Left lung (tissue), 14 donors: ENCODE measurements at regions of chr1 and their contacts with region 1.

Region 1: DNA sequence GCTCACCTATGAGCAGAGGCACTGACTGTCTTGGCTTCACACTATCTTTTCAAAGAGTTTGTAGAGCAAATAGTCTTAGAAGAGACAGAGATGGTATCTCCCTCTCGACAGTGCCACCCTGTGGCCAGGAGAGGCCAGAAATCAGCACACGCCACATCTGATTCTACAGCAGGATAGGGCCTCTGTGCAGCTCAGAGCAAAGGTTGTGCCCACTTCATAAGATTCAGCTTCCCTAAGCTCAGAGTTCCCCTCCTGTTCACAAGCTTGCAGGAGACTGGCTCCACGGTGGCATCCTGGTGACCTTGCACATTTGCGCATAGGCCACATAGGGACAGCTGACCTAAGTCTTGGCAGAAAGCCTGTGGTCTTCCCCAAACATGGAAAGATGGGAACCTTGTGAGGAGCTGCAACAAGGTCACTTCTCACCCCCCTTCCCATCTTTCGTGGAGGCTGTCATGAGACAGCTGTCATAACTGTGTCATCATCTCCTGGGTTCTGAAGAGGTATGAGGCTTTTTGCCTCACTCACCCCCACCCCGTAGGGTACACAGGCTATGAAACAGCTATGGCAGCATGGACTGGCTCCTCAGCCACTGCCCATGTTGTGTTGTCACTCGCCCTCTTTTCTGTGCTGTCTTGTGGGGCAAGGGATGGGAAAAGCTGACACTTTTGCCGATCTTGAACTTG is 3.0 kb downstream of the ITLN2 start:
- DNase-seq: peak; percentile 25 to 83 (median 60)
- ATAC-seq: peak; percentile 96
- H3K4me3 ChIP-seq: no peak overlapping the region
- H3K27ac ChIP-seq: no peak overlapping the region
- H3K4me1 ChIP-seq: no peaks in the 10 kb centered on the region
- H3K27me3 ChIP-seq: peaks cover 0 to under 1% of the 10 kb centered on the region in 2 donors
- CTCF ChIP-seq: peak; percentile 64 to 71

Region 2: DNA sequence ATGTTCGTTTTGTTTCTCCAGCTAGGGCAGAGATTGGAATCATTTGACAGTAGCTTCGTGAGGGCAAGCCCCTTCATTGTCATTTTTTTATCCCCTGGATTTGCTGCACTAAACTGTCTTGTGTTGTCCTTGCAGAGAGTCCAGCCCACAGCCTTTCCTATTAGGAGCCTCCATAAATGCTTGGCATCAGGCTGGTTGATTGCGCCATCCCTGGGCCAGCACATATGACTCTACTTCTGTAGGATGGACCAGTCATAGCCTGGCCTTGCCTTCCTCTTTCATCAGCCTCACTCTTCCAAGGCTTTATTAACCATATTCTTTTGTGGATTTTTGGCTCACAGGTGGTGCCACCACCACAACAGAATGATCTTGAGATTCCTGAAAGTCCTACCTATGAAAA is 124.2 kb before region 1 on chr1:
- intact Hi-C with region 1: no loop called
- DNase-seq: peak in 1 of 4 donors; percentile 65
- ATAC-seq: peak; percentile 55
- H3K4me3 ChIP-seq: no peak overlapping the region
- H3K27ac ChIP-seq: no peak overlapping the region
- H3K4me1 ChIP-seq: no peaks in the 10 kb centered on the region
- H3K27me3 ChIP-seq: no peaks in the 10 kb centered on the region
- CTCF ChIP-seq: no peak

Region 3: GRCh38 chr1:160837558-160838205 is 113.9 kb before region 1 on chr1:
- intact Hi-C with region 1: loop called in 1 of 2 experiments (anchors 5 kb)
- DNase-seq: peak in 2 of 4 donors; percentile 34 to 75
- ATAC-seq: peak; percentile 47
- H3K4me3 ChIP-seq: no peak overlapping the region
- H3K27ac ChIP-seq: peak overlapping the region in 1 of 2 donors; percentile 51
- H3K4me1 ChIP-seq: peaks cover 4 to 31% of the 10 kb centered on the region in 2 donors
- H3K27me3 ChIP-seq: no peaks in the 10 kb centered on the region
- CTCF ChIP-seq: no peak

Region 4: GRCh38 chr1:161054805-161055204 is 103.2 kb after region 1 on chr1:
- intact Hi-C with region 1: no loop called
- DNase-seq: no peak
- ATAC-seq: no peak
- H3K4me3 ChIP-seq: no peak overlapping the region
- H3K27ac ChIP-seq: no peak overlapping the region
- H3K4me1 ChIP-seq: no peaks in the 10 kb centered on the region
- H3K27me3 ChIP-seq: peaks cover 0 to 9% of the 10 kb centered on the region in 2 donors
- CTCF ChIP-seq: peak in 1 of 2 donors; percentile 17

Region 5: DNA sequence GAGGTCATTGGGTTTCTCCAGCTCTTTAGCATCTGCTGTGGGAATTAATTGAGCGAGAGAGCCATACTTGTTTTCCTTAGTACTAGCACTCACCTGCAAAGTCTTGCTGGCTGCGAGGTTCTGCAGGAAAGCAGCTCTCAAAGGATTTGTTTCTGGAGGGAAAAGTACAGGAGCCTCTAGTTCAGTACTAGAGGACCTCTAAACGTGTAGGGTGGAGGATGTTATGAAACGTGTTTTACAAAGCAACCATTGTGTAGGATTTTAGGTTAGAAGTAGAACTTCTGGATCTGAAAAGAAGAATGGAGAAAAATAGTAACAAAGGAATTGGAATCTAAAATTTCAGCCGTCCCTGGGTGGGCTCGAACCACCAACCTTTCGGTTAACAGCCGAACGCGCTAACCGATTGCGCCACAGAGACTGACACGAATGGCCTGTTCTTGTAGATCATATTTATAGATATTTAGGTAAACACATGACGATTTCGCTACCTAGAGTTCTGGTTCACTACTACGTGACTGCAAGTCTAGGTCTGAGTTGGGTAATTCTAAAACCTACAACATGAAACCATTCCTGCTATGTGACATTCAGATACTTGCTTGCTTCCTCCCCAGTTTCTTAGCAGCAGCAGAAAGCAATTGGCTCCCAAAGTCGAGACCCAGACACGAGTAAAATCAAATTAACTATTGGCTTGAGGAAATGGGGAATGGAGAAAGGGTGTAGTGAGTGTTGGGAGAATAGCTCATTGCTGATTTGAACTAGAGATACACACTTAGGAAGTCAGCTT is 476.3 kb after region 1 on chr1:
- intact Hi-C with region 1: no loop called
- DNase-seq: peak in 1 of 4 donors; percentile 32
- ATAC-seq: peak; percentile 56
- H3K4me3 ChIP-seq: no peak overlapping the region
- H3K27ac ChIP-seq: no peak overlapping the region
- H3K4me1 ChIP-seq: no peaks in the 10 kb centered on the region
- H3K27me3 ChIP-seq: peaks cover 8 to 48% of the 10 kb centered on the region in 2 donors
- CTCF ChIP-seq: no peak